Posterior vena cava (tissue), 2 donors: ENCODE measurements at regions of chr19 and their contacts with region 1.

Region 1: GRCh38 chr19:13610039-13610691 is 103.9 kb upstream of the CACNA1A start:
- DNase-seq: no peak

Region 2: DNA sequence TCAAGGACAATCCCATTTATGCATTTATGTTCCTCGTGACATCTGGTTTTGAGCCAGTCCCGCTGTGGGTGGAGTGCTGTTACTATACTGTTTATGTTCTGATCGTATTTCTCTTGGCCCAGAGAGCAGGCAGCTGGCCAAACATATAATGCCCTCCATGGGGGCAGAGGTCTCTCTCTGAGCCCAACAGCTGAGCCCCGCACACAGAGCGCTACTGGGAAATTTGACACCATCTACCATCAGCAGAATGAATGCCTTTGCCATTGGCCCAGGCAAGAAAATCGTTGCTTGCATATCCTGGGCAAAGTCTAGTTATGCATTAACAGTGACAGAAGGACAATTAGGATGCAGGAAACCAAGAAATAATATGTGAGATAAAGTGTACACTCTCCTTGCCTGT is 22.9 kb after region 1 on chr19:
- intact Hi-C with region 1: loop called in 1 of 2 experiments (anchors 1 kb)
- DNase-seq: no peak